ENCODE measurements at regions of chr1 and their contacts with region 1.

Region 1: GRCh38 chr1:179002552-179003345 is 22.9 kb upstream of the FAM20B start:
- DNase-seq: peak; percentile 97
- ATAC-seq: peak; percentile 97
- H3K4me3 Mint-ChIP-seq: peak overlapping the region; percentile 51
- H3K27ac Mint-ChIP-seq: peak overlapping the region; percentile 71; the same call in 1 of the 2 replicates
- H3K4me1 Mint-ChIP-seq: peaks cover 10% of the 10 kb centered on the region
- H3K27me3 Mint-ChIP-seq: no peaks in the 10 kb centered on the region; the same call in 1 of the 2 replicates
- CTCF ChIP-seq: peak; percentile 94

Region 2: DNA sequence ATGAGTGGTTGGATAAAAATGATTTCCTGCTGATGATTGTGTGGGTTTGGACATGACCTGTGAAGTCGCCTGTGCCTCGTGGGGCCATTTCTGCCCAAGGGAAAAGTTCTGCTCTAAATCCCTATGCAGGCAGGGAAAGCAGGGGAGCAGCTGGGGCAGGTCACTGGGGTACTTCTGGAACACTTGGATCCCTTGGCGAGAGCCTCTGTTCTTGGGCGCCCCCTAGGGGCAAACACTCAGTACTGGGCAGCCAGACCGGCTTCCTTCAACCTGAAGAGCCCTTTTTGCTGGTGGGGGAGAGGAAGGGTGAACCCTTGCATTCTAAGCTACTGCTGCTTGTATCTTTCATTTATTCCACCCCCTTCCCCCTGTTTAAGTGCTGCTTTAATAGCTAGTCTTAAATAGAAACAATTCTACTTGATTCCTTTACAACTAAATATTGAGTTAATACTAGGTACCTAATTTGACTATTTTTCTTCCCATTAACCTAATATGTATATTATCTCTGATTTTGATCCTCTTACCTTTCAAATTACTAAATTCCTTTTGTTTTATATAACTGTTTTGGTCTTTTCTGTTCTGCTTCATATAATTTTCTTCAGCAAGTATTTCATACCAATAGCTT is 500.9 kb before region 1 on chr1:
- CTCF ChIA-PET with region 1: interaction called, 19 read pairs
- POLR2A ChIA-PET with region 1: no interaction called
- DNase-seq: peak; percentile 92
- ATAC-seq: peak; percentile 85
- H3K4me3 Mint-ChIP-seq: no peak overlapping the region
- H3K27ac Mint-ChIP-seq: no peak overlapping the region
- H3K4me1 Mint-ChIP-seq: peaks cover 13% of the 10 kb centered on the region
- H3K27me3 Mint-ChIP-seq: no peaks in the 10 kb centered on the region
- CTCF ChIP-seq: peak; percentile 97

Region 3: DNA sequence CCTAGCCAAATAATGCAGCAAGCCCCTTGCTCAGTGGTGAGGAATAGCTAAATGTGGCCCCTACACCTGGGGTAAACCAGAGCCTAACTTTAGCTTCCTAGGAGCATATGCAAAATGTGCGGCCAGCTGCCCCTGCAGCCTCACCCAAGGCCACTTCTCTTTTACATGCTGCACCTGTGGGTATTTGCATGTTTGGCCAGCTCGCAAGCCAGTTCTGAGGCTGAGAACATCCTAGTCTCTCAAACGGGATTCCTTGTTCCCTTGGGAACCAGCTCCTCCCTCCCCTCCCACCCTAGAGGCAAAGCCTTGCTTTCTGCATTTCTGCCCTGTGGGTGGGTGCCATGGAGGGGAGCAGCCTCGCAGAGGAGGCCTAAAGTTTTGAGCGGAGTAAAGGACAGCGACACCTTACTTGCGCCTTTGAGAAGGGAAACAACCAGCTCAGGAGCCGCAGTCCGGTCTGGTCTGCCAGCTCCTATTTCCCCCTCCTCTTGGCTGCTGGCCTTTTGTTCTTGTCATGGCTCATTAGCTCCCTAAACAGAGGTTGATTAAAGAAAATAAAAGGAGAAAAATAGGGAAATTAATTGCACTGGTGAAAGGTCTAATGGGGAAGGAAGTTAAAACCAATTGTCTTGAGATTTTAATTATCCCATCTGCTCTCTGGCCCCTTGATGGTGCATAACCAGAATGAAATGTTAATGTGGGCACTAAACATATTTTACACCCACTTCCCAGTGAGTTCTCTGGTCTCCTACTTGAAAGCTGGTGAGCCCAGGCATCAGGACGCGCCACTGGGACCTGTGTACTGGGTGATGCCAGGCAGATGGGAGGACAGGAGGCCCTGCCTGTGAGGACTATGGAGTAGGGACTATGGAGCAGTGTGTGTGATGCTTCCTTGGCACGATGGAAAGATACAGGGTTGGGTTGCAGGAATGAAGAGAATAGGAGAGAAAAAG is 421.1 kb before region 1 on chr1:
- CTCF ChIA-PET with region 1: interaction called, 14 read pairs
- POLR2A ChIA-PET with region 1: no interaction called
- DNase-seq: peak; percentile 77
- ATAC-seq: peak; percentile 95
- H3K4me3 Mint-ChIP-seq: peak overlapping the region; percentile 42
- H3K27ac Mint-ChIP-seq: peak overlapping the region; percentile 98
- H3K4me1 Mint-ChIP-seq: peaks cover 59% of the 10 kb centered on the region
- H3K27me3 Mint-ChIP-seq: peaks cover 5% of the 10 kb centered on the region
- CTCF ChIP-seq: no peak

Region 4: GRCh38 chr1:178784131-178784536 is 218.6 kb before region 1 on chr1:
- CTCF ChIA-PET with region 1: interaction called, 11 read pairs
- POLR2A ChIA-PET with region 1: no interaction called
- DNase-seq: no peak
- ATAC-seq: no peak
- H3K4me3 Mint-ChIP-seq: no peak overlapping the region
- H3K27ac Mint-ChIP-seq: no peak overlapping the region
- H3K4me1 Mint-ChIP-seq: peaks cover 17% of the 10 kb centered on the region
- H3K27me3 Mint-ChIP-seq: no peaks in the 10 kb centered on the region
- CTCF ChIP-seq: no peak

Region 5: DNA sequence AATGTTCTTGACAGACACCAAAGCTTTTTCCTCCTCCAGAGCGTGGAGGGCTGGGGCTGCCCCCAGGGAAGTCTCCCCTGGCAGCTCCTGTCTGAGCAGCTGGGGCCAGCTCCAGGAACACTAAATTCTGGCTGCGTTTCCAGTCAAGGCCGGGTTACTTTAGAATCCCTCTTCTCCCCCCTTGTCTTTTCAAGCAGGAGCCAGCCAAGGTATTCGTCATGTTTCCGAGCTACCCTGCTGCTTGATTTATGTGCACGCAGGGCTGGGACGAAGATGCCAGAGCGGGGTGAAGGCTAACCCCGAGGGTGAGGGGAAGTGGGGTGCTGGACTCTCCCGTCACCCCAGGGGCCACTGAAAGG is 63.8 kb before region 1 on chr1:
- CTCF ChIA-PET with region 1: interaction called, 18 read pairs
- POLR2A ChIA-PET with region 1: no interaction called
- DNase-seq: no peak
- ATAC-seq: no peak
- H3K4me3 Mint-ChIP-seq: no peak overlapping the region
- H3K27ac Mint-ChIP-seq: no peak overlapping the region
- H3K4me1 Mint-ChIP-seq: peaks cover 13% of the 10 kb centered on the region
- H3K27me3 Mint-ChIP-seq: no peaks in the 10 kb centered on the region
- CTCF ChIP-seq: no peak

Region 6: DNA sequence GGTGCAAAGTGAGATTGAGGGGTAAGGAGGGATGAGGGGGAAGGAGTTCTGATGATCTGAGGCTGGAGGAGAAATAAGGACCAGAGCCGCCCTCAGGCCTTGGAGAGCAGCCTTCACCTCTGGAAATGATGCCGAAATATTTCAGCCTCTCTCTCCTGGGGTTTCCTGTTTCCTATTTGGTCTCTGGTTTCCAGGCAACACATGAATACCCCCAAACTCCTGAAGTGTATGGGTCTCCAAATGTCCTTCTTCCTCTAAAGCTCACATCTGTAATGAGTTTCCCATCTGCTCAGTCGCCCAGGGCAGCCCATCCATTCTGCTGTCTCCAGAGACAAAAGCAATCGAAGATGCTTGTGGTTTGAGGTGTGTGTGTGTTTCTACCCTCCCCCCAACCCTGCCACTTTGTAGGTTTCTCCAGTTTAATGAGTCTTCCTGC is 29.1 kb before region 1 on chr1:
- CTCF ChIA-PET with region 1: interaction called, 16 read pairs
- POLR2A ChIA-PET with region 1: no interaction called
- DNase-seq: no peak
- ATAC-seq: peak; percentile 46
- H3K4me3 Mint-ChIP-seq: no peak overlapping the region
- H3K27ac Mint-ChIP-seq: no peak overlapping the region; the same call in 1 of the 2 replicates
- H3K4me1 Mint-ChIP-seq: peaks cover 14% of the 10 kb centered on the region
- H3K27me3 Mint-ChIP-seq: no peaks in the 10 kb centered on the region; the same call in 1 of the 2 replicates
- CTCF ChIP-seq: no peak

Region 7: DNA sequence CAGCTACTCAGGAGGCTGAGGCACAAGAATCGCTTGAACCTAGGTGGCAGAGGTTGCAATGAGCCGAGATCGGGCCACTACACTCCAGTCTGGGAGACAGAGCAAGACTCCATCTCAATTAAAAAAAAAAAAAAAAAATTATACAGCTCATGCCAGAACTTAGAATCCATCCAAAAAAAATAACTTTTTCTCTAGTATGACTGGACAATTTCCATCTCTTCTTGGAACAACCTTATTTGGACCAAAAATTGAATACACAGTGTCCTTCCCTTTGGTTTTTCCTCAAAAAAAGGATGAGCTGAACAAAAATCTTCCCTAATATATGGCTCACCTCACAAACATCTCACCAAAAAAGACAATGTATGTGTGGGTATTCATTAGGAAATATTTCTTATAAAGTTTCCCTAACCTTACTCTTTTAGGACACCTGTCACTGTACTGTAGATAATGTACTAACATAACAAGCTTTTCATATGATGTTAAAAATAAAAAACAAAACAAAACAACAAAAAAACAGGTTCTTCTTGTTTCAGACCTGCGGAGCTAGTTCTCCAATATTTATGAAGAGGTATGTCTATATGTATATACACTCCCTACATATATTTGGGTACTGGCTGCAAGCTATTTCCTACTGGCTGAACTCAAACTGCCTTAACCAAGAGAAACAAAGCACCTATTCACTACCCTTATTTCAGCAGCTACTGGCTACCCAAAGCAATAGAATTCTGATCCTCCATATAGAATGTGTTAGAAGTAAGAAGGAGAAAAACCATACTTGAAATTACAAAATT is 153.1 kb after region 1 on chr1:
- CTCF ChIA-PET with region 1: no interaction called
- POLR2A ChIA-PET with region 1: no interaction called
- DNase-seq: no peak
- ATAC-seq: no peak
- H3K4me3 Mint-ChIP-seq: no peak overlapping the region
- H3K27ac Mint-ChIP-seq: no peak overlapping the region
- H3K4me1 Mint-ChIP-seq: no peaks in the 10 kb centered on the region
- H3K27me3 Mint-ChIP-seq: no peaks in the 10 kb centered on the region
- CTCF ChIP-seq: no peak

Region 8: DNA sequence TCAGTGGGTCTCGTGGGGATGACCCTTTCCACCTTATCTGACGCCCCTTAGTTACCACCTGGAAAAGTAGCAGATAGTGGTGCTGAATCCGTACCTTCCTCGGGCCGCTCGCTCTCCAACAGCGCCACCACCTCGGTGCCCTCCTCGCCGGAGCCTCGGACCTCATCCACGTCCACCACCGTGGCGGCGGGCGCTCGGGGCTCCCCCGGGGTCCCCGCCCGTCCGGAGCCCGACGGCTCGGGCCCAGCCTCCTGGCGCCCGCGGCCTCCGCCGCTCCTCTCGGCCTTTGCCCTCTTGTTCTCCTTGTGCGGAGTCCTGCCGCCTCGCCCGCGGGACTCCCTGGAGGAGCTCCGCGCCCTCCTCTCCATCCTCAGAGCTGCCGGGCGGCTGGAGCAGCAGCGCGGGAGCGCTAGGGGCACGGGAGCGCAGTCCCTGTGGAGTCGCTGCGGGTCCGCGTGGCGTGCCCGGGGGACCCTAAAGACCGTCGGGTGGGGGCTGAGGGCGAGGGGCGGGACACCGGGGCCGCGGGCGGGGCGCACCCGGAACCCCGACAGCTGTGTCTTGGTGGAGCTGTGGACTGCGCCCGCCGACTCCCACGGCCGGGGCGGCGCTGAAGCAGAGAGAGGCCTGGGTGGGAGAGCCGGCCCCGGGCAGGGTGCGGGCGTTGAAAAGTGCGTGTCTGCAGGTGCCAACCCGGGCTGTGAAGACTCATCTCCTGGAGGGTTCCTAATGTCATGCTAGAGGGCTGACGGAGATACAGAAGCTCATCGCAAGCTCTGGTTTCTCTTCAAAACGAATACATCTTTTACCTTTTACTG is 573.0 kb after region 1 on chr1 and contains the start of gene NPHS2:
- CTCF ChIA-PET with region 1: no interaction called
- POLR2A ChIA-PET with region 1: no interaction called
- DNase-seq: peak; percentile 48
- ATAC-seq: peak; percentile 88
- H3K4me3 Mint-ChIP-seq: peak within 1 kb of the TSS; percentile 67
- H3K27ac Mint-ChIP-seq: no peak within 1 kb of the TSS
- H3K4me1 Mint-ChIP-seq: peaks cover 8% of the 10 kb centered on the region
- H3K27me3 Mint-ChIP-seq: peaks cover 58% of the 10 kb centered on the region
- CTCF ChIP-seq: no peak
- total RNA-seq, gene NPHS2: not detected in 3 replicates

Measured in WTC11 (cell line).